GM12878 (cell line): ENCODE measurements at regions of chr3 and their contacts with region 1.

Region 1: DNA sequence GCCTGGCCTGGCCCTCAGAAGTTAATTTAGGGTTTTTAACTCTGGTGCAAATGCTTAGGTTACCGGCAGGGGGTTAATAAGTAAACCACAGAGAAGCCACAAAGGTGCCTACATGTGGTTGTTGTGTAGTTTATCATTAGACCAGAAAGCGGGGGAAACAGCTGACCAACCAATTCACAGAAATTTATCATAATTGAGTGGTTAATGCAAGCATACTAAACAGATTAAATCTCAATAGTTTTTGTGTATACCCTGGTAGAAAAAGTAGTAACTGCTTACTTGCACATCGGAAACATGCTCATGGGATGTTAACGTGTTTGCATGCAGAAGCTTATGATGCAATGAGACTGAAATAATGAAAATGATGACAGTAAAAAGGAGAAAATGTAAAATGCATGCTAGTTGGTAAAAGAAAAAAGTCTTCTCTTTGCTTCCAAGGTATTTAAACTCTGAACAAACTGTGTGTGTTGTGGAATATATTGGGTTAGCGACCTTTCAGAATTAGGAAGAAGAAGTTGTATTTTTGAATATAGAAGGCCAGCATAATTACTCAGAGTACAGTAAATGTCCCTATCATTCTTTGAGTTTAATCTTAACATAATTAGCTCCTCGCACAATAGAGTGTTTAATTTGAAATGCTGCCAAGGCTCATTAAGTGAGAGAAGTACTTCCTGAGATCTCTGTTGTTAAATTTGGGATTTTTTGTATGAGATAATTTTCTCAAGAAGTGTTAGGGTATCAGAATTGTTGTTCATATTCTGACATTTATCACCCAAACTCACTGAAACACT is 316.2 kb downstream of the PTPRG start:
- DNase-seq: peak; percentile 17
- ATAC-seq: peak; percentile 88
- H3K4me3 ChIP-seq: no peak overlapping the region
- H3K27ac ChIP-seq: no peak overlapping the region
- H3K4me1 ChIP-seq: no peaks in the 10 kb centered on the region
- H3K27me3 ChIP-seq: no peaks in the 10 kb centered on the region; a peak in 2 of 4 replicates
- CTCF ChIP-seq: no peak; a peak in 1 of 6 replicates
- EP300 ChIP-seq: peak in 1 of 2 experiments; percentile 30; a peak in 1 of 4 replicates
- POLR2A ChIP-seq: no peak
- RAD21 ChIP-seq: no peak

Region 2: GRCh38 chr3:61890167-61890566 is 12.6 kb after region 1 on chr3:
- CTCF ChIA-PET with region 1: interaction called, 8 read pairs
- POLR2A ChIA-PET with region 1: interaction called, 17 read pairs
- RAD21 ChIA-PET with region 1: interaction called, 19 read pairs
- SMC1A ChIA-PET with region 1: interaction called, 42 read pairs
- in situ Hi-C with region 1: no loop called
- intact Hi-C with region 1: no loop called
- DNase-seq: no peak
- ATAC-seq: peak; percentile 30
- H3K4me3 ChIP-seq: no peak overlapping the region
- H3K27ac ChIP-seq: no peak overlapping the region
- H3K4me1 ChIP-seq: peaks cover 5% of the 10 kb centered on the region; the same call in 1 of the 2 replicates
- H3K27me3 ChIP-seq: no peaks in the 10 kb centered on the region
- CTCF ChIP-seq: no peak
- EP300 ChIP-seq: no peak
- POLR2A ChIP-seq: no peak
- RAD21 ChIP-seq: no peak